Tibial artery (tissue), 4 donors: ENCODE measurements at regions of chr15 and their contacts with region 1.

Region 1: GRCh38 chr15:74635228-74635627 is 19.6 kb downstream of the CLK3 start:
- DNase-seq: peak in 1 of 2 donors; percentile 57
- H3K4me3 ChIP-seq: no peak overlapping the region
- H3K27ac ChIP-seq: no peak overlapping the region
- H3K4me1 ChIP-seq: peaks cover 0 to 3% (median 0%) of the 10 kb centered on the region in 4 donors
- H3K27me3 ChIP-seq: no peaks in the 10 kb centered on the region
- CTCF ChIP-seq: peak; percentile 81 to 83

Region 2: GRCh38 chr15:74373731-74374647 is 261.2 kb before region 1 on chr15:
- intact Hi-C with region 1: loop called (anchors 5 kb)
- DNase-seq: peak; percentile 92 to 94
- H3K4me3 ChIP-seq: peak overlapping the region; percentile 56 to 58
- H3K27ac ChIP-seq: peak overlapping the region in 1 of 2 donors; percentile 8
- H3K4me1 ChIP-seq: peaks cover 0 to 19% (median 12%) of the 10 kb centered on the region in 4 donors
- H3K27me3 ChIP-seq: peaks cover 0 to 43% of the 10 kb centered on the region in 2 donors
- CTCF ChIP-seq: peak; percentile 85 to 87

Region 3: DNA sequence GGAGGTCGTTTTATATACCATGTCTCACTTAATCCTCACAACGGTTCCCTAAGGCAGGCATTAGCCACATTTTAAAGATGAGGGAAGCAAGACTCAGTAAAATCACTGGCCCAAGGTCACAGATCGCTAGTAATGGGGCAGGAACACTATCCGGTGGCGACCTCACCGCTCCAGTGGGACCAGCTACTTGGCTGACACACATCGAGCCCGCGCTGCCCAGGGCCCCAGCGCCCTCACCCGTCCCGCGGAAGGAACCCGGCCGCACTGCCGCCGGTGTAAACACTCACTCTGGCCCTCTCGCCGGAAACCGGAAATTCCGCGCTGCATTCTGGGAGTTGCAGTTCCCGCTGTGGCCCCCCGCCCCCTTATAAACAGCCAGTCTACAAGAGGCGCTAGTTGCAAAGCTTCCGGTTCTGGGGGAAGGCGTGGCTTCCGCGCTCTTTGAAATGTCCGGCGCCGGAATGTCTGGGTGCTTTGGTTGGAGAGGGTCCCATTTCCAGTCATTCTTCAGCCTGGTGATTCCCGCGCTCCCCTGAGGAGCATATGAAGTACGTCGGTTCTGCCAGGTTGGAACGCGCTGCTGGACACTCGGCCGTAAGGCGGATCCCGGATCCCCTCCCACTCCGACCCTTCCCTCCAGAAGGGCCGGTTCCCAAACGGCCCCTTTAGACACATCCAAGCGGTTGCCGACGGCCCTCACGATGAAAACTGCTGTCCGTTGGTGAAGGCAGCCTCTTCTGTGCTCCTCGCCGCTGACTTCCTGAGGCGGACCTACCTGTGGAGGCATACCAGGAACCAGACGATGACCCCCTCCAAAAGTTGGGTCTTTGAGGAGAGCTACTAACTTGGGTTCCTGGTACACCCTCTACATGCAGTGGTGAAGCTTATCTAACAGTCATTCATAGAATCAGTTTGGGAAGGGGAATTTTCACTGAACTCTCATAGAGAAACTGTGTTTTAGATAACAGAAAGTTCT is 174.1 kb before region 1 on chr15 and contains the start of gene UBL7:
- intact Hi-C with region 1: loop called (anchors 10 kb)
- DNase-seq: peak; percentile 97 to 98
- H3K4me3 ChIP-seq: peak within 1 kb of the TSS; percentile 64 to 78
- H3K27ac ChIP-seq: peak within 1 kb of the TSS; percentile 78 to 83
- H3K4me1 ChIP-seq: peaks cover 0 to 21% (median 8%) of the 10 kb centered on the region in 4 donors
- H3K27me3 ChIP-seq: no peaks in the 10 kb centered on the region
- CTCF ChIP-seq: no peak

Region 4: DNA sequence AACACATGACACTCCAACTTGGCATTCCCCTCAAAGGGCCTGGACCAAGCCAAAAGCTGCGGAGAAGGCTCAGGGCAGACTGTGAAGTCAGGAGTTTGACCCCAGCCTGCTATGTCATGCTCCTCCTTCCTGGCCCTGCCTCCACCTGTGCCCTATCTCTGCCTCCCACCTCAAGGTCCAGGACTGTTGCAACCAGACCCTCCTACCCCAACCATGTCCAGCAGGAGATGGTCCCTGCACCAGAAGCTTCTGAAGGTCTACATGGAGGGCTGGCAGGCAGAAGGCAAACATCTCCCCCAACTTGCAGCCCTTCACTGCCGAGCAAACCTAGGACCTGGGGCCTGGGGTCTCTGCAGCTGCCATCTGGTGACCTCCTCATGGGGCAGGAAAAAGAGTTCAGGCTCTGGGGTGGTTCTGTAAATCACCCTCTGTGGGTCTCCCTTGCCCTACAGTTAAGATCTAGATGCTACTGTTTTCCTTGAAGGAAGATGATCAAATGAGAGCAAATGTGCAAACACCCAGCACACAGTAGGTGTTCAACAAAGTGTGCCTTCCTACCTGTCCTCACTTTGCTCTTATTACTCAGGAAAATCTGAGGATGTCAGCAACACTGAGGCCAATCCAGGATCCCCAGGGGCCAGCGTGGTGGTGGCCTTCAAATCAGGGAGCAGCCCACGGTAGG is 135.1 kb after region 1 on chr15:
- intact Hi-C with region 1: loop called (anchors 2 kb)
- DNase-seq: no peak
- H3K4me3 ChIP-seq: no peak overlapping the region
- H3K27ac ChIP-seq: no peak overlapping the region
- H3K4me1 ChIP-seq: peaks cover 0 to 16% (median 9%) of the 10 kb centered on the region in 4 donors
- H3K27me3 ChIP-seq: peaks cover 0 to 38% of the 10 kb centered on the region in 2 donors
- CTCF ChIP-seq: no peak